ENCODE measurements at regions of chr2 and their contacts with region 1.

Region 1: GRCh38 chr2:26345545-26346453 is at the start of gene SELENOI:
- DNase-seq: peak; percentile 99
- ATAC-seq: peak; percentile 93
- H3K4me3 ChIP-seq: peak within 1 kb of the TSS; percentile 91
- H3K27ac ChIP-seq: peak within 1 kb of the TSS; percentile 82
- H3K4me1 ChIP-seq: peaks cover 44% of the 10 kb centered on the region
- H3K27me3 ChIP-seq: no peaks in the 10 kb centered on the region
- CTCF ChIP-seq: no peak
- total RNA-seq, gene SELENOI: 22.0 and 22.3 TPM in 2 replicates

Region 2: GRCh38 chr2:26469092-26469710 is 123.4 kb after region 1 on chr2:
- CTCF ChIA-PET with region 1: no interaction called
- POLR2A ChIA-PET with region 1: no interaction called
- intact Hi-C with region 1: loop called (anchors 2 kb)
- DNase-seq: peak; percentile 91
- ATAC-seq: peak; percentile 76
- H3K4me3 ChIP-seq: no peak overlapping the region
- H3K27ac ChIP-seq: no peak overlapping the region
- H3K4me1 ChIP-seq: no peaks in the 10 kb centered on the region
- H3K27me3 ChIP-seq: no peaks in the 10 kb centered on the region
- CTCF ChIP-seq: peak; percentile 91

Measured in PC-3 (cell line).